Right ventricle myocardium superior (tissue), 1 donor: ENCODE measurements at regions of chr9 and their contacts with region 1.

Region 1: DNA sequence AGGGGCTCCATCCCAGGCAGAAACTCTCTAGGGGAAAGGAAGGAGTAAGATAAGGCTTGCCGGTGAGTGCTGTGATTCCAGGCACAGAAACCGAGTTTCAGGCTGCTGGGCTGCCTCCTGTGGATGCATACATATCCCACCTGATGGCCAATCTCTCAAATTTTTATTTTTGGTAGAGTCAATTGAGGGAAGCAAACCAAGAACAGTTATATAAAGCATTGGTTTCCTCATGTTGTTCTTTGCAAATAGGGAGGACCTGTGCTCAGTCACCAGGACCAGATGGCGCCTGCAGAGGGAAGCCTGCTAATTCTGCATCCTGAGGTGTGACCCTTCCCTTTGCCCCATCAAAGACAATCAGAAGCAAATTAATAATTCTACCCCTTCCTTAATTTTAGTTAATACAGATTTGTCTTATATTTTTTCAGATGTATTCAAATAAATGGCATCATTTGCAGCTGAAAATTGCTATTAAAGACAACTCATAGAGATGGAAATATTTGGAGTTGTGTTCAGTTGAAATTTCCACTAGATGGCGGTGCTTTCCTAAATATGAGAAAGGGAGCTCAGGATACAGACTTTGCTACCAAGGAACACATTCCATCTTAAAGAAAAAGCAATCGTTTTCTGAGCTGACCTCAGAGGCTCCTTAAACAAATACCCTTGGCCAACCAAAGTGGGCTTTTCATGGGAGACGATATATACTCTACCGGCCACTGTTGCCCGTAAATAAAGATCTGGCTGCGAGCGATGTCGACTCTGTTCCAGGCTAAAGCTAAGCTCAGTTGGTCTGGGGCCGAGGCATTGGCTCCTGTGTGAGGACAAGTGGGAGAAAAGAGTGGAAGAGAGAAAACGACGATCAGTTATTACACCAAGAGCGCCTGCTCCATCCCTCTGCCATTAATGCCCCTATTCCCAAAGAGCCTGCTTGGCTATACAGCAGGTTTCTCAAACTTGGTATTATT is 225.7 kb upstream of the KLF9 start:
- DNase-seq: no peak
- ATAC-seq: peak; percentile 78

Region 2: DNA sequence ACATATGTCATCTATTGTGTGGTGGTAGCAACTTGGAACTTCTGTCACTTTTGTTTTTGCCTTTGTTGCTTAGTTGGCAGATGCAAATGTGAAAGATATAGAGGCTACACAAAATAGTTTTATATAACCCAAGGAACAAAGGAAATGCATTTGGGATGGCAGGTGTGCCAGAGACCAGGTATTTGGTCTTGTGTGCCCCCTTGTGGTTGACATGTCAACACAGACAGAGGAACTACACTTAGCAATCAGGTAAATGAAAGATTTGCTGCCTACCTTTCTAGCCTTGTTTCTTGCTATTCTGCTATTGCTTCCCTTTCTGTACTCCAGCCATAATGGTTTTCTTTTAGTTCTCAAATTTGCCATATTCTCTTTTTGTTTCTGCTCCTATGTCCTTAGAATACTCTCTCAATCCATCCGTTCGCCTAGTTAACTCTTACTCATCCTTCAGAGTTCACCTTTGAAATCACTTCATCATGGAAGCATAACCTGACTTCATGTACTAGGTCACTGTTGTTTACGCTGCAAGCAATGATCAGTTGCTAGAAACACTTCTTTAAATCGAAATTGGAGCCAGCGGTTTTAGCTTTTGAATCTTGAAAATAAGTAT is 361.7 kb after region 1 on chr9:
- intact Hi-C with region 1: loop called (anchors 5 kb)
- DNase-seq: no peak
- ATAC-seq: no peak

Region 3: DNA sequence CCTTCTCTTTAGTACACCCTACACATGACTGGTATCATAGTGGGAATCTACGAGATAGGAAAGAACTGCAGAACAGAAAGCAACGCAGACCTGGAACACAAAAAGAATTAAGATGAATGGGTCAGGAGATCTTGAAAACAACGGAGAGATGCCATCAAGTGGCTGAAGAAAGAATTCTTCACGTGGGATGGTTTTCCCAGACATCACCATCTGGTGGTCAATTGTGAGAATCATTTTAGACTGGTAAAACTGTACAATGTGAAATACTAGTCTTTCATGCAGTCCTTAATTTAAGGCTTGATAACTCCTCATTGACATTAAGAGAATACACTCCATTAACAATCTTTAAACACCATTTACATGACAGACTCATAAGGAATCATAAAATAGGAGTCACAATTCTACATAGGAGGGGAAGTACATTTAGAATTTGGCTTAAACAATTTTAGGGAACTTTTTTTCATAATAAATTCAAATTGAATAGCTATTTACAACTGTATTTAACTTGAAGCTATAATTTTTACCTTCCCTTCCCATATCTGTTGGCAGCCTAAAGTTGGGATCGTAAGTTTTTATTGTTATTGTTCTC is 609.7 kb after region 1 on chr9:
- intact Hi-C with region 1: loop called (anchors 5 kb)
- DNase-seq: no peak
- ATAC-seq: peak; percentile 53